ENCODE measurements at regions of chr3 and their contacts with region 1.

Region 1: GRCh38 chr3:135922903-135923250 is 42.7 kb upstream of the PPP2R3A start:
- DNase-seq: no peak
- ATAC-seq: no peak

Region 2: DNA sequence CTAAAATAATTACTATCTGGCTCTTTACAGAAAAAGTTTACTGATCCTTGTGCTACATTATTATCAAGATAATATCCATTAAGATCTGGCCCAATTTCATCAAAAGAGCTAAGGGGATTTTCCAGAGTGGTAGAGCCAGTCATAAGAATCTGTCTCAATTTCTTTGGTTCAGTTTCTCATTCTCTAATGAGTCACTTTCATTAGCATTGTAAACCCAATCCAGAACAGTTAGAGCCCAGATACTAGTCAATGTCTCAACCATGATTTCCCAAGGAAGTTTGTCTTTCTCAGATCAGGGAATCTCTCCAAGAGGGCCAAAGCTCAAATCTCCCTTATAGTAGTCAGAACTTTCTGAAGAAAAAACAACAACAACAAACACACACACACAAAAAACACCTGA is 88.4 kb before region 1 on chr3:
- intact Hi-C with region 1: no loop called
- DNase-seq: no peak
- ATAC-seq: no peak

Region 3: DNA sequence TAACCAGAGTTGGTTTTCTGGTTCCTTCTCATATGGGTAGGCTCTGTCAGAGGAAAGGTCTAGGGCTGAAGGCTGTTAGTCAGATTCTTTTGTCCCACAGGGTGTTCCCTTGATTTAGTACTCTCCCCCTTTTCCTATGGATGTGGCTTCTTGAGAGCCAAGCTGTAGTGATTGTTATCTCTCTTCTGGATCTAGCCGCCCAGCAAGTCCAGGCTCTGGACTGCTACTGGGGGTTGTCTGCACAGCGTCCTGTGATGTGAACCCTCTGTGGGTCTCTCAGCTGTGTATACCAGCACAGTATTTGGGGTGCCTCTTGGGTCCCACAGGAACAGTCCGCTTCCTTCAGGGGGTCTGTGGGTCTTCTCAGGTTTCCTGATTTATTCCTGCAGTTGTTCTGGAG is 113.4 kb after region 1 on chr3:
- intact Hi-C with region 1: loop called (anchors 5 kb)
- DNase-seq: no peak
- ATAC-seq: no peak

Measured in sciatic nerve (tissue), 2 donors.